SK-N-SH (cell line): ENCODE measurements at regions of chr21 and their contacts with region 1.

Region 1: GRCh38 chr21:45287438-45288391 is at the start of gene POFUT2:
- DNase-seq: peak; percentile 99
- H3K4me3 ChIP-seq: peak within 1 kb of the TSS; percentile 78 to 80
- H3K27ac ChIP-seq: peak within 1 kb of the TSS; percentile 60 to 81
- H3K4me1 ChIP-seq: peaks cover 0 to 31% of the 10 kb centered on the region in 2 experiments; a peak in 1 of 4 replicates
- H3K27me3 ChIP-seq: no peaks in the 10 kb centered on the region
- CTCF ChIP-seq: no peak
- EP300 ChIP-seq: no peak
- RAD21 ChIP-seq: no peak
- polyA plus RNA-seq, gene POFUT2: 45.5 and 53.3 TPM in 2 replicates

Region 2: GRCh38 chr21:45109831-45110492 is 177.8 kb before region 1 on chr21:
- CTCF ChIA-PET with region 1: no interaction called
- POLR2A ChIA-PET with region 1: no interaction called
- DNase-seq: no peak
- H3K4me3 ChIP-seq: no peak overlapping the region
- H3K27ac ChIP-seq: no peak overlapping the region
- H3K4me1 ChIP-seq: peaks cover 0 to 12% of the 10 kb centered on the region in 2 experiments; a peak in 2 of 4 replicates
- H3K27me3 ChIP-seq: no peaks in the 10 kb centered on the region
- CTCF ChIP-seq: no peak
- EP300 ChIP-seq: no peak
- RAD21 ChIP-seq: no peak

Region 3: GRCh38 chr21:45309069-45309986 is 21.6 kb after region 1 on chr21:
- CTCF ChIA-PET with region 1: interaction called, 28 read pairs
- POLR2A ChIA-PET with region 1: no interaction called
- DNase-seq: peak; percentile 82
- H3K4me3 ChIP-seq: no peak overlapping the region; a peak in 1 of 4 replicates
- H3K27ac ChIP-seq: peak overlapping the region; percentile 17 to 86; a peak in 2 of 4 replicates
- H3K4me1 ChIP-seq: peaks cover 3 to 16% of the 10 kb centered on the region in 2 experiments; a peak in 2 of 4 replicates
- H3K27me3 ChIP-seq: no peaks in the 10 kb centered on the region
- CTCF ChIP-seq: peak; percentile 87
- EP300 ChIP-seq: no peak
- RAD21 ChIP-seq: peak; percentile 58

Region 4: DNA sequence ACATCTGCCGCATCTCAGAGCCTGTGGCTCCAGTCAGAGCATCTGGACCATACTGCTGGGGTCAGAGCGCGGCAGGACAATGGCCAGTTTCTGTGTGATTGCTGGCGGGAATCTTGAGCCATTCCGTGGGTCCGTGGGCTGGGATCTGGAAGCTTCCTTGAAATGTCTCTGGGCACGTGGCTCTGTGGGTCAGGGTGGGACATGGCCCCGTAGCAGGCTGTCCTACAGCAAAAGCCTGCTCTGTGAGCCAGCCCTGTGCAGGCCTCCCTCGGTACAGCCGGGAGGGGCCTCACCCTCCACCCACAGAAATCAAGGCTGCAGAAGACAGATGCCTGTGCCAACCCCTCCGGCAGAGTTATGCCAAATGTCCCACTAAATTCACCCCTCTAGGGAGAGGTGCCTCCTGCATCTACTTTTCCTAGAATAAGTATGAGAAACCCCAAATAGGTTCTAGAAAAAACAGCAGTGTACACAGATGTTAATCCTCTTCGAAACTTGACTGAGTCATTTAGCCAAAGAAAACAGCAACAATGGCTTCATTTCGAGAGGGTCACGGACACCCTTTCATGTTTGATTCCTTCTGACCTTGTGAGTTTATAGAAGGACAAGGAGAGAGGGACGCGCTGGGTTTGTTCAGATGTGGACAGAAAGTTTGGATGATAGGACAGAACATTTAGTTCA is 145.0 kb after region 1 on chr21:
- CTCF ChIA-PET with region 1: interaction called, 27 read pairs
- POLR2A ChIA-PET with region 1: no interaction called
- DNase-seq: no peak
- H3K4me3 ChIP-seq: no peak overlapping the region
- H3K27ac ChIP-seq: no peak overlapping the region; a peak in 1 of 4 replicates
- H3K4me1 ChIP-seq: peaks cover 16 to 20% of the 10 kb centered on the region in 2 experiments; a peak in 2 of 4 replicates
- H3K27me3 ChIP-seq: no peaks in the 10 kb centered on the region
- CTCF ChIP-seq: no peak
- EP300 ChIP-seq: no peak
- RAD21 ChIP-seq: no peak

Region 5: DNA sequence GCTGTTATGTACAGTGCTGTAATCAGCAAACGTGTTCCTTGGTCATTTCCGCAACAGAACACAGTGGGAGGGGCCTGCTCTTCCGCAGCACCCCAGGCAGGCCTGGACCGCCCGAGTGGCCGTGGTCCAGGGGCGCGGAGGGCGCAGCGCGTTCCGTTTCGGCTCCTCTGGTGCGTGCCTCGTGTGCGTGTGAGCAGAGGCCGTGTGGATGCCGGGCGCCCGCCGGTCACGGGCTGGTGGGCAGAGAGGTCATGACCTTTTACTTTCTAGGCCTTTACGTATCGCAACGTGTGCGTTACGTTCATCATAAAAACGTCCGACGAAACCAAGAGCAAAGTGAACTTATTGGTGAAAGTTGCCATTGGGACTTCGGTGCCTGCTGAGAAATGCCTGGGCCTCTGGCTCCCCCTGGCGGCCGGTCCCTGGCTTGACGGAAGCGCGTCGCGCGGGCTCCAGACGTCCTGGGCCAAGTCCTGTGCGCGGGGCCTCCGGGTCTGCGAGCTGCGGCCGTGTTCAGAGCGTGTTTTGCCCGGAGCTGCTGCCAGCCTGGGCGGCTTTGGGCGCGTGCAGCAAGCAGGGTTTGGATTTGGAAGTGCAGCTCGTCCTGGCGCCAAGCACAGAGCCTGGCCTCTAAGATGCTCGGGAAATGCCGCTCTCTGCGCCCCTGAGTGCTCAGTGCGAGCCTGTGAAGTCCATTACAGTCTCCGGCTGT is 151.6 kb after region 1 on chr21:
- CTCF ChIA-PET with region 1: interaction called, 31 read pairs
- POLR2A ChIA-PET with region 1: interaction called, 3 read pairs
- DNase-seq: peak; percentile 95
- H3K4me3 ChIP-seq: no peak overlapping the region; a peak in 1 of 4 replicates
- H3K27ac ChIP-seq: peak overlapping the region in 1 of 2 experiments; percentile 32; a peak in 1 of 4 replicates
- H3K4me1 ChIP-seq: peaks cover 0 to 4% of the 10 kb centered on the region in 2 experiments; a peak in 1 of 4 replicates
- H3K27me3 ChIP-seq: no peaks in the 10 kb centered on the region
- CTCF ChIP-seq: peak; percentile 83
- EP300 ChIP-seq: no peak
- RAD21 ChIP-seq: peak; percentile 96